Mammary epithelial cell (primary cell): ENCODE measurements at regions of chr5 and their contacts with region 1.

Region 1: GRCh38 chr5:135880278-135880677 is 15.4 kb downstream of the IL9 start:
- DNase-seq: no peak
- H3K4me3 ChIP-seq: no peak overlapping the region
- H3K27ac ChIP-seq: no peak overlapping the region
- H3K4me1 ChIP-seq: peaks cover 14% of the 10 kb centered on the region
- H3K27me3 ChIP-seq: no peaks in the 10 kb centered on the region
- CTCF ChIP-seq: peak in 1 of 2 donors; percentile 28

Region 2: DNA sequence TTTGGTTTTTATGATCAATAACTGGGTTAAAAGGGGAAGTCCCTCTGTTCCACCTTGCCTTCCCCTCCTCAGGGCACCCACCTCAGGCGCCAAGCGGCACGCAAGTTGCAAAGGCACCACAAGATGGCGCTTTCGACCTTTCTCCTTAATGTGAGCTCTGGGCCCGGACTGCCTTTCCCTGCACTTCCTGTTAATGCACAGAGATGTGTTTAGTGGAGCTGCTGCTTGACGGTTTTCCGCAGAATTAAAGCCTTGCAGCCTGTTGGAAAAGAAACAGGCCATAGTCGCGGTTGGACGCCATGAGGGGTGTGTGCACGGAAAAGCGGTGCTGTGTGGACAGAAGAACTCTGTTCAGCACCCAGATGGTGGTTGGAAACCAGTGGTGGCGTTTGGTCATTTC is 319.4 kb before region 1 on chr5:
- CTCF ChIA-PET with region 1: no interaction called
- dilution Hi-C with region 1: no loop called
- in situ Hi-C with region 1: no loop called
- intact Hi-C with region 1: loop called (anchors 2 kb)
- DNase-seq: peak; percentile 55
- H3K4me3 ChIP-seq: no peak overlapping the region
- H3K27ac ChIP-seq: no peak overlapping the region
- H3K4me1 ChIP-seq: no peaks in the 10 kb centered on the region
- H3K27me3 ChIP-seq: peaks cover under 1% of the 10 kb centered on the region
- CTCF ChIP-seq: peak; percentile 84 to 92

Region 3: GRCh38 chr5:135821061-135821801 is 59.0 kb before region 1 on chr5:
- CTCF ChIA-PET with region 1: no interaction called
- dilution Hi-C with region 1: no loop called
- in situ Hi-C with region 1: no loop called
- intact Hi-C with region 1: no loop called
- DNase-seq: peak; percentile 31
- H3K4me3 ChIP-seq: no peak overlapping the region
- H3K27ac ChIP-seq: no peak overlapping the region
- H3K4me1 ChIP-seq: no peaks in the 10 kb centered on the region
- H3K27me3 ChIP-seq: no peaks in the 10 kb centered on the region
- CTCF ChIP-seq: no peak